Activated CD8-positive, alpha-beta memory T cell treated with anti-CD3 and anti-CD28 coated beads, Interleukin-2, amount 10 ng/mL, durations not matched to agents 7 days and 5 days (primary cell): ENCODE measurements at regions of chr9 and their contacts with region 1.

Region 1: GRCh38 chr9:83649080-83649479 is 26.1 kb downstream of the IDNK start:
- DNase-seq: peak; percentile 81
- ATAC-seq: peak; percentile 90
- H3K4me3 Mint-ChIP-seq: no peak overlapping the region
- H3K27ac Mint-ChIP-seq: no peak overlapping the region
- H3K4me1 Mint-ChIP-seq: peaks cover 3% of the 10 kb centered on the region
- H3K27me3 Mint-ChIP-seq: no peaks in the 10 kb centered on the region

Region 2: GRCh38 chr9:83334320-83334719 is 314.8 kb before region 1 on chr9:
- CTCF ChIA-PET with region 1: no interaction called
- DNase-seq: peak; percentile 79
- ATAC-seq: peak; percentile 81
- H3K4me3 Mint-ChIP-seq: no peak overlapping the region
- H3K27ac Mint-ChIP-seq: no peak overlapping the region
- H3K4me1 Mint-ChIP-seq: peaks cover 8% of the 10 kb centered on the region
- H3K27me3 Mint-ChIP-seq: no peaks in the 10 kb centered on the region

Region 3: DNA sequence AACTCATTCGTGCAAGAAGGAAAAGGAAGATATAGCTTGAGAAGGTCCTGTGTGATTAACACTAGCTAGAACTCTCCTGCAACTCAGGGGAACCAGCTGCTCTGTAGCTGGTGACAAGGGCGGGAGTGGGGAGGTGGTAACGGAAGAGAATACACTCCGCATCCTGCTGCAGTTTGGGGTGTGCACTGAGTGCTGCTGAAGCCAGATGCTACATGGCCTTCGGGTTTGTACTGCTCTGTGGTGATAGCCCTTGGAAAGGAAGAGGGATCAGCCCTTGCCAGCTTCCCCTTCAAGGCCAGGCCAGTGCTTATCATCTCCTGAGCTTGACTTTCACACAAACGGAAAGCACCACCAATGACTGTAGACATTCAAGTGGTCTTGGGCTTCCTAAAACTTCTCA is 145.2 kb before region 1 on chr9:
- CTCF ChIA-PET with region 1: no interaction called
- DNase-seq: no peak
- ATAC-seq: no peak
- H3K4me3 Mint-ChIP-seq: no peak overlapping the region
- H3K27ac Mint-ChIP-seq: no peak overlapping the region
- H3K4me1 Mint-ChIP-seq: peaks cover 10% of the 10 kb centered on the region
- H3K27me3 Mint-ChIP-seq: no peaks in the 10 kb centered on the region

Region 4: GRCh38 chr9:83588256-83588655 is 60.8 kb before region 1 on chr9:
- CTCF ChIA-PET with region 1: no interaction called
- DNase-seq: no peak
- ATAC-seq: no peak
- H3K4me3 Mint-ChIP-seq: no peak overlapping the region
- H3K27ac Mint-ChIP-seq: no peak overlapping the region
- H3K4me1 Mint-ChIP-seq: no peaks in the 10 kb centered on the region
- H3K27me3 Mint-ChIP-seq: no peaks in the 10 kb centered on the region

Region 5: DNA sequence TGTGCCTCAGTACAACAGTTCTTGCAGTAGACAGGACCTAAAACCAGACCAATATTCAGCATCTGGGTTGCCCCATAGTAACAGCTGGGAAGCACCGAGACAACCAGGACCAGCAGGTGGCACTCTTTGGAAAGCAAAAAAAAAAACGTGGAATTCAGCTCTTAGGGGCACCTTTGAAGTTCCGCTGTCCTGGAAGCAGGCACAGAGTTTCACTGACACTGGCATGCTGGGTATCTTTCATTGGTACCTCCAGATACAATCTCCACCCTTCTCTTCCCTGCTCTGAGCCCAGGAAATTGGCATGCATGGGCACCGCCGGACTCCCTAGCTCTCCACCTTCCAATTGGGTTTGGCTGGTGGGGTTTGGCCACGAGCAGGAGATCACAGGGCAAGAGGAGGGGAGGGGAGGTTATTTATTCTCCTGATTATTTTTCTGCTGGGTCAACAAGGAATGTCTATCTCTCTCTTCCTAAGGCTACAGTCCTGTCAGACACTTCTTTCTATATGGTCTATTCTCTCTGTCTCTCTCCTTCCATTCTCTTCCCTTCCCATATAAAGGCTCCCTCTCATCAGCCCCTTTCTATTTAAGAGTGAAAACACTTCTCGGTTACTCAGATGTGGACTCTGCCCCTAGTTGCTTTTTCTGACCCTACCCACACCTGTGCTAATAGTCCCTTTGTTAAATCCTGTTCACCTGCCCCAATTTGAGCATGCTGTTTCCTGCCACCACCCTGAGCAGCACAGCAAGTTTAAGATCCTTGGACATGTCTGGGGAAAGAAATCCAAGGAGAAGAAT is 28.0 kb before region 1 on chr9:
- CTCF ChIA-PET with region 1: interaction called, 39 read pairs
- DNase-seq: peak; percentile 53
- ATAC-seq: no peak
- H3K4me3 Mint-ChIP-seq: peak overlapping the region; percentile 10
- H3K27ac Mint-ChIP-seq: no peak overlapping the region
- H3K4me1 Mint-ChIP-seq: peaks cover 25% of the 10 kb centered on the region
- H3K27me3 Mint-ChIP-seq: peaks cover 5% of the 10 kb centered on the region

Region 6: DNA sequence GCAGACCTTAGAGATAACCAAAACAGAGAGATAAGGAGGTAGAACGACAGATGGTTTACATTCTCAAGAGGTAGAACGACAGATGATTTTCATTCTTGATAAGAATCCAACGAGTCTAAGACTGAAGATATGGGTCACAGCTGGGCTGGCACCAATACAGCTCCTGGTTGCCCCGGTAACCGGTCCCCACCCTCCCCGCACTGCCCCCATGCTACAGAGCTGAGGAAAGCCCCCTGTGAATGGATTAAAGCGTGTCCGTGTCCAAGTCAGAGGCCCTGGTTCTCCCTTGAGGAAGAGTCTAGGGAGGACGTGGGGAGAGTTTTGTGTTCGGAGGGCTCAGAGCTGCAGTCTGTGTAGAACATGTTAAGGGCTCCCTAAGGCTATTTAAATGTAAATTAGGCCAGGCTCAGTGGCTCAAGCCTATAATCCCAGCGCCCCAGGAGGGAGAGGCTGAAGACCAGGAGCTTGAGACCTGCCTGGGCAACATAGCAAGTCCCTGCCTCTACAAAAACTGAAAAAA is 18.1 kb before region 1 on chr9:
- CTCF ChIA-PET with region 1: interaction called, 19 read pairs
- DNase-seq: no peak
- ATAC-seq: no peak
- H3K4me3 Mint-ChIP-seq: no peak overlapping the region
- H3K27ac Mint-ChIP-seq: no peak overlapping the region
- H3K4me1 Mint-ChIP-seq: no peaks in the 10 kb centered on the region
- H3K27me3 Mint-ChIP-seq: no peaks in the 10 kb centered on the region

Region 7: GRCh38 chr9:83707768-83708514 is 58.9 kb after region 1 on chr9 and contains the start of gene UBQLN1:
- CTCF ChIA-PET with region 1: interaction called, 11 read pairs
- DNase-seq: peak; percentile 94
- ATAC-seq: peak; percentile 82
- H3K4me3 Mint-ChIP-seq: peak within 1 kb of the TSS; percentile 86
- H3K27ac Mint-ChIP-seq: peak within 1 kb of the TSS; percentile 99
- H3K4me1 Mint-ChIP-seq: peaks cover 42% of the 10 kb centered on the region
- H3K27me3 Mint-ChIP-seq: no peaks in the 10 kb centered on the region
- total RNA-seq, gene UBQLN1: 90.3 to 100.0 TPM